CD8-positive, alpha-beta T cell (primary cell): ENCODE measurements at regions of chr2 and their contacts with region 1.

Region 1: DNA sequence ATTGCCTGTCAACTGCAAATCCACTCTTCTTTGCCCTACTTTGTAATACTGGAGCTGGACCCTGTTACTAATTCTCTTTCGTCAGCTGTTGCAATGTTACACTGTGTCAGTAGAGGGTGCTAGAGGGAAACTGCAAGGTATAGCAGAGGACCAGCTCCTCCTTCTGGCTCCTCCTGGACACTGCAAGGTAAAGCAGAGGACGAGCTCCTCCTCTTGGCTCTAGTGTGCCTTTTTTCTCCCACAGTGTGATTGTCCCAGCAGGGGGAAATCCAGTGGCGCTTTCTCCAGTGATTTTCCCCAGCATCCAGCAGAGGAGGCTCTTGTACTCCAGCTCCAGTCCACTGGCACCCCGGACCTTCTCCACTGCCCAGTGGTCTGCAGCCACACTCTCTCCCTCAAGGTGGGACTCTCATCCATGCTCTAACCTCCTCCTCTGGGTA is 95.6 kb downstream of the CAPN13 start:
- DNase-seq: peak; percentile 63 to 92 (median 83)
- ATAC-seq: peak; percentile 95
- H3K4me3 ChIP-seq: no peak overlapping the region
- H3K4me3 Mint-ChIP-seq: no peak overlapping the region
- H3K27ac ChIP-seq: no peak overlapping the region
- H3K27ac Mint-ChIP-seq: no peak overlapping the region
- H3K4me1 ChIP-seq: no peaks in the 10 kb centered on the region
- H3K4me1 Mint-ChIP-seq: peaks cover 4% of the 10 kb centered on the region
- H3K27me3 ChIP-seq: no peaks in the 10 kb centered on the region
- H3K27me3 Mint-ChIP-seq: peaks cover 3% of the 10 kb centered on the region
- CTCF ChIP-seq: peak; percentile 100

Region 2: GRCh38 chr2:29923110-29923721 is 788.5 kb before region 1 on chr2:
- CTCF ChIA-PET with region 1: interaction called, 6 read pairs
- POLR2A ChIA-PET with region 1: no interaction called
- intact Hi-C with region 1: loop called in 1 of 2 experiments (anchors 10 kb)
- DNase-seq: peak in 8 of 9 experiments; percentile 11 to 59 (median 39)
- ATAC-seq: no peak
- H3K4me3 ChIP-seq: no peak overlapping the region
- H3K4me3 Mint-ChIP-seq: no peak overlapping the region
- H3K27ac ChIP-seq: no peak overlapping the region
- H3K27ac Mint-ChIP-seq: no peak overlapping the region
- H3K4me1 ChIP-seq: peaks cover 6% of the 10 kb centered on the region
- H3K4me1 Mint-ChIP-seq: peaks cover 23% of the 10 kb centered on the region
- H3K27me3 ChIP-seq: peaks cover 15 to 20% of the 10 kb centered on the region in 2 experiments
- H3K27me3 Mint-ChIP-seq: peaks cover 56% of the 10 kb centered on the region
- CTCF ChIP-seq: peak; percentile 96

Region 3: GRCh38 chr2:30155889-30156658 is 555.6 kb before region 1 on chr2:
- CTCF ChIA-PET with region 1: interaction called, 17 read pairs
- POLR2A ChIA-PET with region 1: no interaction called
- intact Hi-C with region 1: no loop called
- DNase-seq: no peak
- ATAC-seq: no peak
- H3K4me3 ChIP-seq: no peak overlapping the region
- H3K4me3 Mint-ChIP-seq: no peak overlapping the region
- H3K27ac ChIP-seq: no peak overlapping the region
- H3K27ac Mint-ChIP-seq: no peak overlapping the region
- H3K4me1 ChIP-seq: peaks cover 10% of the 10 kb centered on the region
- H3K4me1 Mint-ChIP-seq: peaks cover 53% of the 10 kb centered on the region
- H3K27me3 ChIP-seq: no peaks in the 10 kb centered on the region
- H3K27me3 Mint-ChIP-seq: no peaks in the 10 kb centered on the region
- CTCF ChIP-seq: no peak

Region 4: GRCh38 chr2:30225131-30225762 is 486.4 kb before region 1 on chr2:
- CTCF ChIA-PET with region 1: interaction called, 21 read pairs
- POLR2A ChIA-PET with region 1: interaction called, 3 read pairs
- intact Hi-C with region 1: no loop called
- DNase-seq: peak in 8 of 9 experiments; percentile 37 to 86 (median 57)
- ATAC-seq: peak; percentile 68
- H3K4me3 ChIP-seq: peak overlapping the region; percentile 59 to 61
- H3K4me3 Mint-ChIP-seq: peak overlapping the region; percentile 99
- H3K27ac ChIP-seq: peak overlapping the region; percentile 78 to 93
- H3K27ac Mint-ChIP-seq: peak overlapping the region; percentile 100
- H3K4me1 ChIP-seq: peaks cover 76% of the 10 kb centered on the region
- H3K4me1 Mint-ChIP-seq: peaks cover 83% of the 10 kb centered on the region
- H3K27me3 ChIP-seq: no peaks in the 10 kb centered on the region
- H3K27me3 Mint-ChIP-seq: no peaks in the 10 kb centered on the region
- CTCF ChIP-seq: no peak

Region 5: DNA sequence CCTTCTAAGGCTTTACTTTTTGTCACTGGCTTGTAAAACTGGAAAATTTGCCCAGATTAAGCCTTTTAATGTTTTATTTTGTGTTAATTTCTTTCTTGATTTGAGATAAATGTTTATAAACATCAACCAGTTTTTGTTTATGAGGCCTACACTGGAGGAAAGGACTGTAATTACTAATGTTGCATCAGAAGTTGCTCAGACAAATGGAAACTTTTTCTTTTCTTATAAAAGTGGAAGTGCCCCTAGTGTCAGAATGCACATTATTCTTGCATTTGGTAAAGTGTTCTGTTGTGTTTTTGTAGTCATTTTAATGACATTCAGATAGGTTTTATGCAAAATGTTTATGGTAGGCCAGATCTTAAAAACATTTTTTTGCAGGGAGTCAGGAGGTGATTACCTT is 239.3 kb before region 1 on chr2:
- CTCF ChIA-PET with region 1: interaction called, 4 read pairs
- POLR2A ChIA-PET with region 1: no interaction called
- intact Hi-C with region 1: loop called in 1 of 2 experiments (anchors 2 kb)
- DNase-seq: no peak
- ATAC-seq: no peak
- H3K4me3 ChIP-seq: no peak overlapping the region
- H3K4me3 Mint-ChIP-seq: no peak overlapping the region
- H3K27ac ChIP-seq: no peak overlapping the region
- H3K27ac Mint-ChIP-seq: no peak overlapping the region
- H3K4me1 ChIP-seq: peaks cover 14% of the 10 kb centered on the region
- H3K4me1 Mint-ChIP-seq: peaks cover 49% of the 10 kb centered on the region
- H3K27me3 ChIP-seq: no peaks in the 10 kb centered on the region
- H3K27me3 Mint-ChIP-seq: no peaks in the 10 kb centered on the region
- CTCF ChIP-seq: no peak

Region 6: GRCh38 chr2:30721668-30722647 is 10.3 kb after region 1 on chr2:
- CTCF ChIA-PET with region 1: interaction called, 37 read pairs
- POLR2A ChIA-PET with region 1: no interaction called
- intact Hi-C with region 1: no loop called
- DNase-seq: peak in 2 of 9 experiments; percentile 5 to 27
- ATAC-seq: no peak
- H3K4me3 ChIP-seq: no peak overlapping the region
- H3K4me3 Mint-ChIP-seq: no peak overlapping the region
- H3K27ac ChIP-seq: no peak overlapping the region
- H3K27ac Mint-ChIP-seq: no peak overlapping the region
- H3K4me1 ChIP-seq: no peaks in the 10 kb centered on the region
- H3K4me1 Mint-ChIP-seq: no peaks in the 10 kb centered on the region
- H3K27me3 ChIP-seq: no peaks in the 10 kb centered on the region
- H3K27me3 Mint-ChIP-seq: peaks cover 8% of the 10 kb centered on the region
- CTCF ChIP-seq: no peak

Region 7: DNA sequence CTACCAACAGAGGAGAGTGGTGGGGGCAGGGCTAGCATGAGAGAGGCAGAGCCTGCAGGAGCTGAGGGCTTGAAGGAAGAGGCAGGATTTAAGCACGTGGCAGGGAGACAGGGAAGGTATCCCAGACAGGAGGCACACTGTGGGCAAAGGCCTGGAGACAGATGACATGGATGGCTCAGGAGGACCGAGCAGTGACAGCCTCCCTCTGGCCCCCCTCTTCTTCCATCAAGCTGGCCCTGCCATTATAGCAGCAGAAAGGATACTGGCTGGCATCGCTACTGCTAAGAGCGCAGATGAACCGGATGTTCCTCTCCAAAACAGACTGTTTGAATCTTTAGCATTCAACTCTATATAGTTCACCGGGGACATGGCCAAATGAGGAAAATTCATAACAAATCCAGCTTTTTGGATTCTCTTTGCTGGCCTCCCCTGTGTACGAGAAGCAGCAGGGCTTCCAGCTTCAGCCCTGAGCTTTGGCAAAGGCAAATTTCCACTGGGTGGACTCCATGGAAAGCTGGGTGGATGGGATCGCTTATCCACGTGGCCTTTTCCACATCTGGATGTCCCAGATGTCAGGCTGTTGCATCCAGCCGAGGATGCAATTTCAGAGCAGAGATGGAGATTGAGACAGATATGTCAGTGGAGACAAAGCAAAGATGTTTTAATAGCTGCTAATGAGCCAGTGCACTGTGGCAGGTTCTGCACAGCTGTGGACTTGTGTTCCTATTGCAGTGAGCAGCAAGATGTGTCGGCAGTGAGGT is 59.3 kb after region 1 on chr2:
- CTCF ChIA-PET with region 1: no interaction called
- POLR2A ChIA-PET with region 1: no interaction called
- intact Hi-C with region 1: no loop called
- DNase-seq: peak in 1 of 9 experiments; percentile 4
- ATAC-seq: no peak
- H3K4me3 ChIP-seq: no peak overlapping the region
- H3K4me3 Mint-ChIP-seq: no peak overlapping the region
- H3K27ac ChIP-seq: no peak overlapping the region
- H3K27ac Mint-ChIP-seq: no peak overlapping the region
- H3K4me1 ChIP-seq: peaks cover 3% of the 10 kb centered on the region
- H3K4me1 Mint-ChIP-seq: peaks cover 4% of the 10 kb centered on the region
- H3K27me3 ChIP-seq: no peaks in the 10 kb centered on the region
- H3K27me3 Mint-ChIP-seq: peaks cover 9% of the 10 kb centered on the region
- CTCF ChIP-seq: no peak

Region 8: DNA sequence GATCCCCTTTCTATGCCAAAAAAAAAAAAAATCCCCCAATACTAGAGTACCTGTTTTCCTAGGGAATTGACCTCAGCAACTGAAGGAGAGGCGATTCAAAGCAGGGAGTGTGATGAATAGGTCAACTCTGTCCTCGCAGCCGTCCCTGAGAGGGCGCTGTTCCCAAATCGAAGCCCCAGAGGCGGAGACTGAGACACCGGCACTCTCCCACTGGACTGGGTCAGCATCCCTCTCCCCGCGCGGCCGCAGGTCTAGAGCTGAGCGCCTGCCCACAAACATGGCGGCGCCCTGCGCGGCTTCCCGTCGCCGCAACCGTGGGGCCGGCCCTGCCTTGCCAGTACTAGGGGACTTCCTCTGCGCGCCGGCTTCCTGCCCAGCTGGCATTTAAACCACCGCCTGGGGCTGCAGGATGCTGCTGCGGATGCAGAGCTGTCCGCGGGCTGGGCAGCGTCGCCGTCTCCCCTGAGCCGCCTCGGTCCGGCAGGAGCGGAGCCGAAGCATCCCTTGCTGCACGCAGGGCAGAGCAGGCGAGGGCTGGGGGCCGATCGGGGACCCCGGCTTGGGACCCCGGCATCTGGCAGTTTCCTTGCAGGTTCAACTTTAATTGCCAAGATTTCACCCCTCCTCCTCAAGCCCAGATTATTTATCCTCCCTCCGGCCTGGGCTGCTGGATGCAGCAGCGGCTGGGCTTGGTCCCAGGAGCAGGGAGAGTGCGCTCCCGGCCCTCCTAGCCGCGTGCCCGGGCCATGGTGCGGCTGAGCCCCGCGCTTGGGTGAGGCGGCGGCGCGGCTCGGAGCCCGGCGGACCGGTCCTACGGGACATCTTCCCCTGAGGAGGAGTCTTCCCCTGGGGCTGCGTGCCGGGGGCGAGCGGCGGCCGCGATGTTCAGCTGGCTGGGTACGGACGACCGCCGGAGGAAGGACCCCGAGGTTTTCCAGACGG is 522.3 kb after region 1 on chr2 and contains the start of gene EHD3:
- CTCF ChIA-PET with region 1: no interaction called
- POLR2A ChIA-PET with region 1: no interaction called
- intact Hi-C with region 1: loop called in 1 of 2 experiments (anchors 5 kb)
- DNase-seq: peak; percentile 46 to 88 (median 73)
- ATAC-seq: peak; percentile 96
- H3K4me3 ChIP-seq: peak within 1 kb of the TSS; percentile 67
- H3K4me3 Mint-ChIP-seq: peak within 1 kb of the TSS; percentile 79
- H3K27ac ChIP-seq: no peak within 1 kb of the TSS
- H3K27ac Mint-ChIP-seq: no peak within 1 kb of the TSS
- H3K4me1 ChIP-seq: peaks cover 16% of the 10 kb centered on the region
- H3K4me1 Mint-ChIP-seq: peaks cover 26% of the 10 kb centered on the region
- H3K27me3 ChIP-seq: no peaks in the 10 kb centered on the region
- H3K27me3 Mint-ChIP-seq: no peaks in the 10 kb centered on the region
- CTCF ChIP-seq: no peak
- total RNA-seq, gene EHD3: 0.81 to 0.95 TPM